CD14-positive monocyte (primary cell): ENCODE measurements at regions of chr12 and their contacts with region 1.

Region 1: GRCh38 chr12:131608740-131609690 is 101.9 kb upstream of the SFSWAP start:
- DNase-seq: peak; percentile 58 to 68 (median 67)
- H3K4me3 ChIP-seq: no peak overlapping the region
- H3K4me3 Mint-ChIP-seq: no peak overlapping the region
- H3K27ac ChIP-seq: no peak overlapping the region
- H3K27ac Mint-ChIP-seq: no peak overlapping the region
- H3K4me1 ChIP-seq: peaks cover 47 to 54% of the 10 kb centered on the region in 2 donors
- H3K4me1 Mint-ChIP-seq: peaks cover 54% of the 10 kb centered on the region
- H3K27me3 ChIP-seq: no peaks in the 10 kb centered on the region
- H3K27me3 Mint-ChIP-seq: peaks cover 3 to 8% (median 8%) of the 10 kb centered on the region in 3 donors
- CTCF ChIP-seq: peak; percentile 92

Region 2: GRCh38 chr12:131559517-131560516 is 49.2 kb before region 1 on chr12:
- intact Hi-C with region 1: no loop called
- DNase-seq: no peak
- H3K4me3 ChIP-seq: no peak overlapping the region
- H3K4me3 Mint-ChIP-seq: no peak overlapping the region
- H3K27ac ChIP-seq: no peak overlapping the region
- H3K27ac Mint-ChIP-seq: no peak overlapping the region
- H3K4me1 ChIP-seq: no peaks in the 10 kb centered on the region
- H3K4me1 Mint-ChIP-seq: no peaks in the 10 kb centered on the region
- H3K27me3 ChIP-seq: no peaks in the 10 kb centered on the region
- H3K27me3 Mint-ChIP-seq: peaks cover 3 to 6% (median 4%) of the 10 kb centered on the region in 3 donors
- CTCF ChIP-seq: no peak

Region 3: DNA sequence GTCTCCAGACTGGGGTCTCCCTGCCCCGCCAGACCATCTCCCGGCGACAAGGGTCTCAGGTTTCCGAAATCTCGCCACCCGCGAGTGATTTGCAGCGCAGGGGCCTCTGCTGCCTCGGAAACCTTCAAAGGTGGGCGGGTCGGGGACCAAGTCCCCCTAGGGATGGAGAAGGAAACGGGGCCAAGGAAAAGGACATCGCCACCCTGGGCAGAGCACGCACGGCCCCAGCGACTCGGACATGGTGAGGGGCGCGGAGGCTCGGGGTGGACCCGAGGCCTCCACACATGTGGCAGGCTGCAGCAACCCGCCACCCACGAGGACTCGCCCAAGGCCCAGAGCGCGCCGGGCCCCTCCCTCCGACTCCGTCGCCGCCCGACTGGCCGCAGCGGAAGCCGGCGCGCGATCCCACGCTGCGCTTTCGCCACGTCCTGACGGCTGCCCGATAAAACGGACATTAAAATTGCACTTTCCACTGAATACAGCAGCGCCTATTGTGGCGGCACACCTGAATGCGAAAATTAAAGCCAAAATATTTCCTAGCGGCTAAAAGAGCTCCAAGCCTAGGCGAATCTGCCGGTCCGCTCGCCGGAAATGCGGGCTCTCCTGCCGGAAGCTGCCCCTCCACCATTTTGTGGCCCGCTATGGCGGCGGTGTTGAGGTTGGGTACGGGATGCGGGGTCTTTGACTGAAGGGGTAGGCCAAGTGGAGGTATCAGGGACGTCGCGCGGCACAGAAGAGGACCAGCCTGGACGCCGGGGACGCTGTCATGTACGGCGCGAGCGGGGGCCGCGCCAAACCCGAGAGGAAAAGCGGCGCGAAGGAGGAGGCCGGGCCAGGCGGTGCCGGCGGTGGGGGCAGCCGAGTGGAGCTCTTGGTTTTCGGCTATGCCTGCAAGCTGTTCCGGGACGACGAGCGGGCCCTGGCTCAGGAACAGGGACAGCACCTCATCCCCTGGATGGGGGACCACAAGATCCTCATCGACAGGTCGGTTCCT is 101.7 kb after region 1 on chr12 and contains the start of gene SFSWAP:
- intact Hi-C with region 1: loop called in 1 of 2 experiments (anchors 10 kb)
- DNase-seq: peak; percentile 67 to 73 (median 73)
- H3K4me3 ChIP-seq: peak within 1 kb of the TSS; percentile 83 to 98 (median 95)
- H3K4me3 Mint-ChIP-seq: peak within 1 kb of the TSS; percentile 96 to 99
- H3K27ac ChIP-seq: peak within 1 kb of the TSS; percentile 73 to 98
- H3K27ac Mint-ChIP-seq: peak within 1 kb of the TSS; percentile 92 to 99 (median 98)
- H3K4me1 ChIP-seq: peaks cover 21 to 22% of the 10 kb centered on the region in 2 donors
- H3K4me1 Mint-ChIP-seq: peaks cover 20% of the 10 kb centered on the region
- H3K27me3 ChIP-seq: no peaks in the 10 kb centered on the region
- H3K27me3 Mint-ChIP-seq: peaks cover 0 to 2% (median 0%) of the 10 kb centered on the region in 3 donors
- CTCF ChIP-seq: no peak
- polyA plus RNA-seq, gene SFSWAP: 7.3 to 33.0 (median 10.7) TPM

Region 4: DNA sequence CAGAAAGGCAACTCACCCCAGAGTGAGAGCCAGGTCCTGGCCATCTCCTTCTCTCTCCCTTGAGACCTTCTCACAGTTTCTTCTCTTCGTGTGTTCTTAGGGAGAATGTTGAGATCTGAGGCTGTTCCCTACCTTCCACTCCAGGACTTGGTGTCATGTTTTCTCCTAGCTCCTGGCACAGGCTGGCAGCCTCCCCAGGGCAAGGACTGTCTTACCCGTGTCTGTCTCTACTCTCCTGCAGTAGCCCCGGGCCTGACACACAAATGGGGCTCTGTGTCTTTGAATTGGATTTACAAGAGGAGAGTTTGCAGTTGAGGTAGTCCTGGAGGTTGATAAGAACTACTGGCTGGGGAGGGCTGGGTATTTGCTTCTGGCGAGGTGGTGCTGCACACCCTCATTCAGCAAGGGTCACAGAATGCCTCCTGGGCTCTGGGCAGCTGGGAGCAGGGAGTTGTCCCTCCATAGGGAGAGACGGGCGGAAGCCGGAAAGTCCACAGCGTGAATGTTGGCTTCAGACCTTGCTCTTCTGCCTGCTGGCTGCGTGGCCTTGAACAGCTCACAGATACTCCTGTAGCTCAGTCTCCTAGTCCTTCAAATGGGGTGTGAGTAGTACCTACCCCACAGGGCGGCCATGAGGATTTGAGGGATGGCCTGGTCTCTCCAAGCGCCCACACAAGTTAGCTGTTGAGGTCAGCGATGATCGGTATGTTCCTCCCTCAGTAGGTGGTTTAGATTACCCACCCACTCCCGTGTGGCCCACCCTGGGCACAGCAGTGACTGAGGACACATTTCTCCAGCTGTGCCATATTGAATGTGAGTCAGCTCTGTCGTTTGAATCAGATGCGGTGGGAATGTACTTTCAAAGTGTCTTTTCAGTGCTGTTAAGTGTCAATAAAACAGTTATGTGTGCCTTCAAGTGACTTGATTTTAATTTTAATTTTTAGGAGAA is 350.9 kb after region 1 on chr12:
- intact Hi-C with region 1: no loop called
- DNase-seq: no peak
- H3K4me3 ChIP-seq: no peak overlapping the region
- H3K4me3 Mint-ChIP-seq: no peak overlapping the region
- H3K27ac ChIP-seq: no peak overlapping the region
- H3K27ac Mint-ChIP-seq: peak overlapping the region in 2 of 7 donors; percentile 58 to 75
- H3K4me1 ChIP-seq: no peaks in the 10 kb centered on the region
- H3K4me1 Mint-ChIP-seq: peaks cover 20% of the 10 kb centered on the region
- H3K27me3 ChIP-seq: no peaks in the 10 kb centered on the region
- H3K27me3 Mint-ChIP-seq: no peaks in the 10 kb centered on the region
- CTCF ChIP-seq: no peak